ENCODE measurements at regions of chr21 and their contacts with region 1.

Region 1: GRCh38 chr21:45981151-45982089 is at the start of gene COL6A1:
- DNase-seq: no peak
- H3K4me3 ChIP-seq: peak within 1 kb of the TSS; percentile 84
- CTCF ChIP-seq: no peak

Region 2: DNA sequence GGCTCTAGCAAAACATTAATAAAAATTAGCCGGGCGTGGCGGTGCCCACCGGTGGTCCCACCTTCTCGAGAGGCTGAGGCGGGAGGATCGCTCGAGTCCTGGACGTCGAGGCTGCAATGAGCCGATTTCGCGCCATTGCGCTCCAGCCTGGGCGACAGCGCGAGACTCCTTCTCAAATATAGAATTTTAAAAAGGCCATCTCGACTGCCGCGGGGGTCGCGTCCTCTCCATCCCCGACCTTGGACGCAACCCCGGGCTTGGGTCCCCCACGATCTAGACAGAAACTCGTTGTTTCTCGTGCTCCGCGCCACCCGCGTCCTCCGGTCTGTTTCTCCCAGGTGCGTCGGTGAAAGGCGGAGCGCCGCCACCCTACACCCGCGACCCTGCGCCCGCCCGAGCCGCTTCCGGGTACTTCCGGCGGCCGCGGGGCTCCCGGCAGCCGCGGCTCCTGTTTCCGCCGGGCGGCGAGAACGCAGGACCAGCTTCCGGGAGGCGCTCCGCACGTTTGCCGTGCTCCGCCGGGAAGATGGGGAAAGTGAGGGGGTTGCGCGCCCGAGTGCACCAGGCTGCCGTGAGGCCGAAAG is 1041.8 kb before region 1 on chr21 and contains the start of gene SLX9:
- CTCF ChIA-PET with region 1: no interaction called
- POLR2A ChIA-PET with region 1: no interaction called
- DNase-seq: no peak
- H3K4me3 ChIP-seq: peak within 1 kb of the TSS; percentile 91
- CTCF ChIP-seq: no peak

Region 3: DNA sequence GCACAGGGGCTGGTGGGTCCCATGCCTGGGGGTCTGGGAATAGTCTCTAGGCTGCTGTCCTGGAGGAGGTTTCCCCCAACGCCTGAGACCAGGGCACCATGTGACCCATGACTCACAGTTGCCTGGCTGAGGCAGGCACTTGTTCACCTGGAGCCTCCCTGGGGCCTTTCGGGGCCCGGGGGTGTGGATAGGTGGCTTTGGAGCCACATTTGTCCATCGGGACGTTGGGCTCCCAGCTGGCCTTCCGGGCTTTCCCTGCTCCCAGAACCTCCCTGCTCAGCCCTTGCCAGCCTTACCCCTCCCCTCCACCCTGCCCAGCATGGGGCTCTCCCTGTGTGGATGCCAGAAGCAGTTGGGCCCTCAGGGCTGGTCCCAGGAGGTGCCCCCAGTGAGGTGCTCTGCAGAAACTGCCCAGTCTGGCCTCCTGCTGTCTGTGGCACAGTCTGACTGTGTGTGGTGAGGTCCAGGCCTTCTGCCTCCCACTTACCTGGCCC is 14.3 kb after region 1 on chr21:
- CTCF ChIA-PET with region 1: no interaction called
- POLR2A ChIA-PET with region 1: interaction called, 21 read pairs
- DNase-seq: no peak
- H3K4me3 ChIP-seq: no peak overlapping the region
- CTCF ChIP-seq: no peak

Region 4: GRCh38 chr21:46079352-46080170 is 98.1 kb after region 1 on chr21:
- CTCF ChIA-PET with region 1: no interaction called
- POLR2A ChIA-PET with region 1: interaction called, 14 read pairs
- DNase-seq: peak; percentile 76
- H3K4me3 ChIP-seq: no peak overlapping the region
- CTCF ChIP-seq: no peak

Region 5: DNA sequence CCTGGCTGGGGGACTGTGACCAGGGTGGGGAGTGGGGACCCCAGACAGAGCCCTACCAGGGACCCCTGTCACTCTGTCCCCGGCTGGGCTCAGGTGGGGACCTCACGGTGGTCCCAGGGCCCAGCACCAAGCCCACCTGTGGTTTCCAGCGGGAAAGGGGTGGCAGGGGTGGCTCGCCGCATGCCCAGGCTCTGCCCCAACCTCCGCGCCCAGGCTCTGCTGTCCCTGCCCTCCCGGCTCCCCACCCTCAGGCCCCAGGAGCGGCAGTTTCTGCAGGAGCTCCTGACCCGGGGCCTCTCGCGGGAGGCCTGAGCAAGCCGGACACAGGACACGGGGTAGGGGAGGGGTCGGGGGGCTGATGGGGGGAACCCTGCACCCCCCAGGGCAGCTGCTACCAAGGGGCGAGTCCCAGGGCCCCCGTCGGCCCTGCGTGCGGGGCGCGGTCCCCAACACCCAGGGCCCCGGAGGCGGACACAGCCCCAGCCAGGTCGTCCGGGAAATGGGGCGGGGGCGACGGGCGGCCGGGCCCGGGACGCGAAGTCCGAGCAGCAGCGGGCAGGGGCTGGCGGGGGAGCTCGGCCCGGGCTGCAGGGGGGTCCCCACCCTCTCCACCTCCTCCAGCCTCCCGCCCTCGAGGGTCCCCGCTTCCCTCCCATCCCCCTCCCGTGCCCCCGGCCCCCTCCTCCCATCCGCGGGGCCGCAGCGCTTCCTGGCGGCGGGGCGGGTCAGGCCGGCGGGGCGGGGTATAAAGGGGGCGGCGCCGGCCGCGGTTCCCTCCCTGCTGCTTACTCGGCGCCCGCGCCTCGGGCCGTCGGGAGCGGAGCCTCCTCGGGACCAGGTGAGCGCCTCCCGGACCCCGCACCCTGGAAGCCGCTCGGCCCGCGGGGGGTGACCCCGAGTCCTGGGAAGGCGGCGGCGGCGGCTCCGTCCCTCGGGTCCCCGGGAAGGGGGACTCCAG is 116.2 kb after region 1 on chr21 and contains the start of gene COL6A2:
- CTCF ChIA-PET with region 1: interaction called, 3 read pairs
- POLR2A ChIA-PET with region 1: interaction called, 11 read pairs
- DNase-seq: no peak
- H3K4me3 ChIP-seq: peak within 1 kb of the TSS; percentile 81
- CTCF ChIP-seq: peak; percentile 26